ENCODE measurements at regions of chr11 and their contacts with region 1.

Region 1: DNA sequence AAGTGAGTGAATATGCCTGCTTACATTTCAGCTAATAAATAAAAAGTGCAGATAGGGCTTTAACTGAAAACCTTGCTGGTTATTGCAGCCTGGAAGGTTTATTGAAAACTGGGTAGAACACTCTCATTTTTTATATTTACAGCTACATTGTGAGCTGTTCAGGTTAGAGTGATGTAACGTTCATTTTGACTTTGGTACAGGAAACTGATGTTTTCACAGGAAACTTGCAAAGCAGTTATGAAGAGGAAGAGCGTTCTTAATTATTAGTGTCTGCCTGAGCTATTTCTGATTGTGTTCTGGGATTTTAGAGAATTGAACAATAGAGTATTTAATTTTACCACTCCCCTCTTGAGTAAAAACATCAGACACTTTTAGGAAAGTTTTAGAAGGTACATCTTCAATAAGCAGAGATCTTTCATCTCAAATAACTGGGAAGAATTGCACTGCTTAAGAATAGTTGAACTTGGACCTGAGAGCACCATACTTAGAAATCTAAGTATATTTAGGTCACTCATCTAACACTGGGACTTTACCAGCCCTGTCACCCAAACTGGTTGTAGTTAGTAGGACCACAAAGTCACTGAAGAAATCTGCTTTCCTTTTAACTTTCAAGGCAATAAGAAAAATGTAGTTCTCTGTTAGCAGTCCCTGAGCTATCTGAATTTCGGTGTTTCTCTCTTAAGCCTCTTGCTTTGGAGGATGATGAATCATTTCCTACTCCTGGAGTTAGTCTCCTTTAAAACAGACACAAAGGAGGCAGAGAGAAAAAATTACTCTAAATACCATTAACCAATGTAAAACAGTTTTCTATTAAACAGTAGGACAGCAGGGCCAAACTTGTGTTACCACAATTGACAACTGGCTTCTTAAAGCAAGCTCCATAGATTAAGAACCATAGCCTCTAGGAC is 128.6 kb upstream of the DDI1 start:
- DNase-seq: peak; percentile 6
- H3K4me3 ChIP-seq: no peak overlapping the region
- H3K27ac ChIP-seq: no peak overlapping the region
- H3K4me1 ChIP-seq: no peaks in the 10 kb centered on the region
- H3K27me3 ChIP-seq: no peaks in the 10 kb centered on the region
- CTCF ChIP-seq: no peak

Region 2: GRCh38 chr11:103700622-103701021 is 207.2 kb before region 1 on chr11:
- CTCF ChIA-PET with region 1: no interaction called
- dilution Hi-C with region 1: no loop called
- in situ Hi-C with region 1: no loop called
- intact Hi-C with region 1: loop called (anchors 5 kb)
- DNase-seq: peak; percentile 68
- H3K4me3 ChIP-seq: no peak overlapping the region
- H3K27ac ChIP-seq: no peak overlapping the region
- H3K4me1 ChIP-seq: no peaks in the 10 kb centered on the region
- H3K27me3 ChIP-seq: no peaks in the 10 kb centered on the region
- CTCF ChIP-seq: no peak

Region 3: GRCh38 chr11:103978614-103979595 is 71.1 kb after region 1 on chr11:
- CTCF ChIA-PET with region 1: no interaction called
- dilution Hi-C with region 1: no loop called
- in situ Hi-C with region 1: no loop called
- intact Hi-C with region 1: no loop called
- DNase-seq: no peak
- H3K4me3 ChIP-seq: no peak overlapping the region
- H3K27ac ChIP-seq: no peak overlapping the region
- H3K4me1 ChIP-seq: no peaks in the 10 kb centered on the region
- H3K27me3 ChIP-seq: no peaks in the 10 kb centered on the region
- CTCF ChIP-seq: no peak

Measured in mammary epithelial cell (primary cell).